CD14-positive monocyte (primary cell): ENCODE measurements at regions of chr1 and their contacts with region 1.

Region 1: GRCh38 chr1:205591522-205592351 is 40.1 kb downstream of the ELK4 start:
- DNase-seq: peak; percentile 74 to 80 (median 76)
- H3K4me3 ChIP-seq: peak overlapping the region; percentile 2 to 65 (median 30)
- H3K4me3 Mint-ChIP-seq: peak overlapping the region; percentile 74 to 95
- H3K27ac ChIP-seq: no peak overlapping the region
- H3K27ac Mint-ChIP-seq: peak overlapping the region in 4 of 7 donors; percentile 46 to 83 (median 70)
- H3K4me1 ChIP-seq: peaks cover 14 to 20% of the 10 kb centered on the region in 2 donors
- H3K4me1 Mint-ChIP-seq: peaks cover 31% of the 10 kb centered on the region
- H3K27me3 ChIP-seq: no peaks in the 10 kb centered on the region
- H3K27me3 Mint-ChIP-seq: peaks cover 0 to 6% (median 2%) of the 10 kb centered on the region in 3 donors
- CTCF ChIP-seq: peak; percentile 95

Region 2: DNA sequence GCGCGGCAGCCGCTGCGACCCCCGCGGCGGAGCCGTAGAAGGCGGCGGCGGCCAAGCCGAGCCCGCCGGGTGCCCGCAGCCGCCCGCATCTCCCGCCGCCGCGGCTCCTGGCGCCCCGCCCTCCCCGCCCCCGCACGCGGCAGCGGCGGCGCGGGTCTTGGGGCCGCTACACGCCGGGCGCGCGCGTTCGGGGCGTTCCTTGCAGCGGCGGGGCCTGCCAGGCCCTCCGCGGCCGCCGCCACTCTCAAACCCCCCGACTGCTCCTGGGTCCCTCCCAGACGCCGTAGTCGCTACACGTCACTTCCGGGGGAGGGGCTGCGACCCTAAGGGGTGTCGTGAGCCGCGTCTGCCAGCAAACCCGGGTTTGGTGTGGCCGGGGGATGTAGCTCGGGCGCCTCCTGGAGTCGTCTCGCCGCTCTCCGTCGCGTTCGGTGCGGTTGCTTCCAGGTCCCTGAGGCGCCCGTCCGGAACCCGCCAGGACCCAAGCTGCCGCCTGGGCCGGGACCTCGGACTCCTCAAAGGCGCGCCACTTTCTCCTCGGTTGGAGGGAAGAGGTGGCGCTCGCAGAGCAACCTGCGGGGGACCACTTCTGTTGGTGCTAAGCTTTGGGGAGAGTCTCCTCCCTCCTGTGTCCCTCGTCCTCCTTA is 40.1 kb after region 1 on chr1 and contains the start of gene ELK4:
- intact Hi-C with region 1: loop called (anchors 2 to 5 kb)
- DNase-seq: peak; percentile 96 to 98 (median 98)
- H3K4me3 ChIP-seq: peak within 1 kb of the TSS; percentile 73 to 99 (median 91)
- H3K4me3 Mint-ChIP-seq: peak within 1 kb of the TSS; percentile 98 to 100
- H3K27ac ChIP-seq: peak within 1 kb of the TSS; percentile 88 to 91
- H3K27ac Mint-ChIP-seq: peak within 1 kb of the TSS; percentile 94 to 99 (median 97)
- H3K4me1 ChIP-seq: peaks cover 17 to 25% of the 10 kb centered on the region in 2 donors
- H3K4me1 Mint-ChIP-seq: peaks cover 39% of the 10 kb centered on the region
- H3K27me3 ChIP-seq: no peaks in the 10 kb centered on the region
- H3K27me3 Mint-ChIP-seq: peaks cover 0 to 3% (median 0%) of the 10 kb centered on the region in 3 donors
- CTCF ChIP-seq: peak; percentile 75
- polyA plus RNA-seq, gene ELK4: 1.4 to 9.0 (median 2.6) TPM

Region 3: DNA sequence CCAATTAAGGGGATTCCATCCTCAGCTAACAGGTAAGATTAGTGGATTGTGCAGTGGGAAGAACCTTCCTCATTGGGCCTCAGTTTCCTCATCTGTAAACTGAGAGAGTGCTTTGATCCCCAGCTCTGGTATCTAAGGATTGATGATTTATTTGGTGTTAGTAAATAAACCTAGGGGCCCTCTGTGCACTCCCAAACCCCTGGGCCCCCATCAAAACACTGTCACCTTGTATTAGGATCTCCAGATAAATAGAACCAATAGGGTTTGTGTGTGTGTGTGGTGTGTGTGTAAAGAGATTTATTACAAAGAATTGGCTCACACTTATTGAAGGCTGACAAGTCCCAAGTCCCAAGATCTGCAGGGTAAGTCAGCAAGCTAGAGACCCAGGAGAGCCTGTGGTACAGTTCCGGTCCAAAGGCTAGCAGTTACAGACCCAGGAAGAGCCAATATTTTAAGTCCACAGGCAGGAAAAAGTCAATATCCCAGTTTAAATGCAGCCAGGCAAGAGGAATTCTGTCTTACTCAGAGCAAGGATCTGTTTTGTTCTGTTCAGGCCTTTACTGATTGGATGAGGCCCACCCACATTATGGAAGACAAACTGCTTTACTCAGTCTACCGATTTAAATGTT is 51.1 kb after region 1 on chr1:
- intact Hi-C with region 1: no loop called
- DNase-seq: no peak
- H3K4me3 ChIP-seq: no peak overlapping the region
- H3K4me3 Mint-ChIP-seq: no peak overlapping the region
- H3K27ac ChIP-seq: no peak overlapping the region
- H3K27ac Mint-ChIP-seq: no peak overlapping the region
- H3K4me1 ChIP-seq: no peaks in the 10 kb centered on the region
- H3K4me1 Mint-ChIP-seq: no peaks in the 10 kb centered on the region
- H3K27me3 ChIP-seq: no peaks in the 10 kb centered on the region
- H3K27me3 Mint-ChIP-seq: peaks cover 0 to 4% (median 2%) of the 10 kb centered on the region in 3 donors
- CTCF ChIP-seq: no peak

Region 4: GRCh38 chr1:205658943-205659581 is 67.3 kb after region 1 on chr1:
- intact Hi-C with region 1: loop called (anchors 2 kb)
- DNase-seq: peak; percentile 61 to 74 (median 70)
- H3K4me3 ChIP-seq: no peak overlapping the region
- H3K4me3 Mint-ChIP-seq: no peak overlapping the region
- H3K27ac ChIP-seq: no peak overlapping the region
- H3K27ac Mint-ChIP-seq: peak overlapping the region in 1 of 7 donors; percentile 37
- H3K4me1 ChIP-seq: peaks cover 10% of the 10 kb centered on the region in 2 donors
- H3K4me1 Mint-ChIP-seq: peaks cover 10% of the 10 kb centered on the region
- H3K27me3 ChIP-seq: no peaks in the 10 kb centered on the region
- H3K27me3 Mint-ChIP-seq: peaks cover 2 to 8% (median 5%) of the 10 kb centered on the region in 3 donors
- CTCF ChIP-seq: peak; percentile 91